GM23248 (cell line): ENCODE measurements at regions of chr5 and their contacts with region 1.

Region 1: DNA sequence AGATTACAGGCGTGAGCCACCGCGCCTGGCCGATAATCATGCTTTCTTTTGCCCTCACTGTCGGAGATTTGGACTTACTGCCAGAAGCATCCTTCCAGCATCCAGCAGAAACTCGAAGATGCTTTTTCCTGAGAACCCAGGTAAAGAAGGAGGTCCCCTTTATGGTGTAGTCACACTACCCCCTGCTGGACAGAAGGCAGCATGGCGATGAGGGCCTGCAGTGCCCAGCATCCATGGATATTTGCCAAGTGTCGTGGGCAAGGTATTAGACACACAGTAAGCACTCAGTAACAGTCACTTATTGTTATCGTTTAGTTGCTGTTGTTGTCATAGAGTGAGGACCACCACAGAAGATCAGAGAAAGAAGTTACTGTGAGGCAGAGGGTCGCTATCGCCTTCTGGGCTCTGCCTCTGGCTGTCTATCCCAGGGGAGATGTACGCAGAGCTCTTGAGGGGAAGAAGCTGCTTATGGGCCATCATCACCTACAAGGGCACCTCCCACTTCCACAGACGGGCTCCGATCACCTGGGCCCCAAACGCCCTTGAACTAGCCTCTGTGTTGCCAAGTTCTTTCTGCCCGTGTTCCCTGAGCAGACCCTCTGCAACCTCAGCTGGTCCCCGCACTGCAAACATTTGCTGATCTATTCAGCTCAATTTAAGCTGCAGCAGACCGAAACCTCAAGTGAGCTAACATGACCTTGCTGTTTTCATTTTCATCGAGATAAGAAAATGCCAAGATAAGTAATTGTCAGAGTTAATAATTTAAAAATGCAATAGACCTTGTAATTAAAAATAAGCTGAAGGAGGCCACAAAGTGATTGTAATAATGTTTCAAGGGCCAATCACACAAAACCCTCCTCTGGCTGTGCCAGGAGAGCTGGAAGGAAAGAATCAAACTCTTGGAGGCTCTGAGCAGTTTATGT is 23.9 kb downstream of the C5orf15 start:
- DNase-seq: peak; percentile 72
- H3K4me3 ChIP-seq: no peak overlapping the region
- H3K27ac ChIP-seq: no peak overlapping the region
- H3K4me1 ChIP-seq: no peaks in the 10 kb centered on the region
- H3K27me3 ChIP-seq: no peaks in the 10 kb centered on the region

Region 2: DNA sequence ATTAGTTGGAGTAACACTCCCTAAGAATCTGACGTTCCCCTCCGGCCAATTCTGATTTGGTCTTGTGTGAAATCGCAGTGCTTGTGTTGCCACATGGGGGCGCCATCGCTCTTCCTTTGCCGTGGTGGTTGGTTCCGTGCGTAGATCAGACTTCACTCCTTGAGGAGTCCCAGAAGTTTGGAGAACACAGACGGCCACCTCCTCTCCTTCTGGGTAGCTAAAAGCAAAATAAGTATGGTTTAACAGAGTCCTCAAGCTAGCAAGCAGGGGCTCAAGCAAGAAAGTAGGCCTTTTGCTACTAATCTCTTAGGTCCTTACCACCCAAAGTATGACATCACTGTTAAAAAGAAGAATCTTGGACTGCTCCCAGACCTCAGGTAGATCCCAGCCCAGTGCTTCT is 833.2 kb before region 1 on chr5:
- in situ Hi-C with region 1: loop called (anchors 25 kb)
- DNase-seq: peak; percentile 86
- H3K4me3 ChIP-seq: no peak overlapping the region
- H3K27ac ChIP-seq: no peak overlapping the region
- H3K4me1 ChIP-seq: 0 out of 2 replicates have a peak, but pooled peaks cover 6% of the 10 kb centered on the region
- H3K27me3 ChIP-seq: no peaks in the 10 kb centered on the region